ENCODE measurements at regions of chr9 and their contacts with region 1.

Region 1: GRCh38 chr9:136769710-136770191 is 5.4 kb upstream of the LCN15 start:
- DNase-seq: peak; percentile 71
- H3K4me3 Mint-ChIP-seq: no peak overlapping the region
- H3K27ac Mint-ChIP-seq: no peak overlapping the region
- H3K4me1 Mint-ChIP-seq: peaks cover 17% of the 10 kb centered on the region
- H3K27me3 Mint-ChIP-seq: peaks cover 11% of the 10 kb centered on the region

Region 2: DNA sequence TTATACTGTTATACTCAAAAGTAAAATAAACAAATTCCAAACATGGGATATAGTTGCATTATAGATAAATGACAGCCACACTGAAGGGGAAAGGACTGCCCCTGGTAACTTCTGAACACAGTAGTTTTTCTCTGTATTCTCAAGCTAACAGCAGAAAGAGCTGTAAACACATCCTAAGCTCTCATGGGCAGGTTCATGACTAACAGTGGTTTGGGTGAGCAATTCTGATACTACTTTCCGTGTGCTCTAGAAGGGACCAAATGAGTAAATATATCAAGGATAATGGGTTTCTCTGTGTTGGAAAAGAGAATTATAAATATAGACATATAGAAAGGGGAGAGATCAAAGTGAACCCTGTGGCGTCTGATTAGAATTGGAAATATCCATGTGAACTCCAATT is 19.2 kb before region 1 on chr9:
- CTCF ChIA-PET with region 1: interaction called, 9 read pairs
- POLR2A ChIA-PET with region 1: no interaction called
- intact Hi-C with region 1: loop called (anchors 2 kb)
- DNase-seq: no peak
- H3K4me3 Mint-ChIP-seq: no peak overlapping the region
- H3K27ac Mint-ChIP-seq: no peak overlapping the region
- H3K4me1 Mint-ChIP-seq: peaks cover 9% of the 10 kb centered on the region
- H3K27me3 Mint-ChIP-seq: peaks cover 9% of the 10 kb centered on the region

Region 3: DNA sequence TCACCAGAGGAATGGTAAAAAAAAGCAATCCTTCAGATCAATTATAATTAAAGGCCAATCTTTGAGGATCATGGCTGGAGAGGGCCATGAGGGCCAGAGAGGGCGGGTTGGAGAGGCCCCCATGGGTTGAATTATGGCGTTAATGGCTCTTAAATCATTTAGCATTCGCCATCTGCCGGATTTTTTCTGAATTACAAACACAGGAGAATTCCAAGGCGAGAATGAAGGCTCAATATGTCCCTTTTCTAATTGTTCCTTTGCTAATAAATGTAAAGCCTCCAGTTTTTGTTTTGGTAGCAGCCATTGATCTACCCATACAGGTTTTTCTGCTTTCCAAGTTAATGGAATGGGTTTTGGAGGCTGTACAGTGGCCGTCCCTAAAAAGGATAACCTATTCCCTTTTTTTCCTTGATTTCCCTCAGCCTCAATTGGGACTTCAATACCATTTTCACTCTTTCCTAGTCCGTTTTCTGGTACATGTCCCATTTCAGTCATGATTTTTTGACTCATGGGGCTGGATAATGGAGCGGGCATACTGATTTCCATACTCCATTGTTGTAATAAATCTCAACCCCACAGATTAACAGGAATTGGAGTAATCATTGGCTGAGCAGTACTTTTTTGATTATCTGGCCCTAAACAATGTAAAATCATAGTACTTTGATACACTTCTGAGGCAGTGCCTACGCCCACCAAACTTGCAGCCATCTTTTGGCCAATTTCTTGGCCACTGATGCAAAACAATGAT is 14.7 kb after region 1 on chr9:
- CTCF ChIA-PET with region 1: interaction called, 13 read pairs
- POLR2A ChIA-PET with region 1: no interaction called
- intact Hi-C with region 1: loop called (anchors 1 kb)
- DNase-seq: no peak
- H3K4me3 Mint-ChIP-seq: no peak overlapping the region
- H3K27ac Mint-ChIP-seq: no peak overlapping the region
- H3K4me1 Mint-ChIP-seq: peaks cover 16% of the 10 kb centered on the region
- H3K27me3 Mint-ChIP-seq: peaks cover 1% of the 10 kb centered on the region